Activated CD4-positive, alpha-beta T cell treated with anti-CD3 and anti-CD28 coated beads, Interleukin-2, amount 10 ng/mL, durations not matched to agents 7 days and 5 days (primary cell): ENCODE measurements at regions of chr7 and their contacts with region 1.

Region 1: DNA sequence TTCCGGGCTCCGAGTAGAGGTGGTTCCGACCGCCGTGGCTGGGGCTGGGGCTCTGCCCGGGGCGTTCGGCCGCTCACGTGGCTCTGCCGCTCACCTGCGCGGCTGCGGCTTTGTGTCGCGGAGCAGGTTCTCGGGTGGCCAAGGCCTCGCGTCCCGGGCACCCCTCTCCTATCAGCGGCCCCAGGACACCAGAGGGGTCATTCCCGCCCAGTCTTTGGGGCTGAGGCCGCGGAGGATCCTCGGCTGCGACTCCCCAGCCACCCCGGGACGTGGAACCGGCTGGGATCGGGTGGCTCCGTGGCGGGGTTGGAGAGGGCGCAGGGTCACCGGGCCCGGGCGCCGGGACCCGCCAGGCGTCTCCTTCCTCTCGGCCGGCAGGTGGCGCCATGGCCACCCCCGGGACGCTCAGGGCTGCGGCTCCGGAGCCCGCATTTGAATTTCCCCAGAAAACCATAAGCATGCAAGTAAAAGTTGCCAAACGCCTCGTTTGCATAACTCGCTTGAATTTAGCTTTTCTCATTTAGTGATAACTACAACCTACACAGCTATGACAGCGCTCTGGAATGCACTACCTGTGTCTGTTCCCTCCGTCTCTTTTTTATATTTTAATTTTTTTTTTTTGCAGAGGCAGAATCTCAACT is 1.2 kb downstream of the COL26A1 start:
- DNase-seq: peak; percentile 65
- H3K4me3 Mint-ChIP-seq: no peak overlapping the region
- H3K27ac Mint-ChIP-seq: no peak overlapping the region
- H3K4me1 Mint-ChIP-seq: no peaks in the 10 kb centered on the region
- H3K27me3 Mint-ChIP-seq: peaks cover 28% of the 10 kb centered on the region

Region 2: GRCh38 chr7:101373812-101374614 is 10.2 kb after region 1 on chr7:
- CTCF ChIA-PET with region 1: interaction called, 17 read pairs
- POLR2A ChIA-PET with region 1: no interaction called
- DNase-seq: no peak
- H3K4me3 Mint-ChIP-seq: no peak overlapping the region
- H3K27ac Mint-ChIP-seq: no peak overlapping the region
- H3K4me1 Mint-ChIP-seq: peaks cover 5% of the 10 kb centered on the region
- H3K27me3 Mint-ChIP-seq: peaks cover 15% of the 10 kb centered on the region

Region 3: DNA sequence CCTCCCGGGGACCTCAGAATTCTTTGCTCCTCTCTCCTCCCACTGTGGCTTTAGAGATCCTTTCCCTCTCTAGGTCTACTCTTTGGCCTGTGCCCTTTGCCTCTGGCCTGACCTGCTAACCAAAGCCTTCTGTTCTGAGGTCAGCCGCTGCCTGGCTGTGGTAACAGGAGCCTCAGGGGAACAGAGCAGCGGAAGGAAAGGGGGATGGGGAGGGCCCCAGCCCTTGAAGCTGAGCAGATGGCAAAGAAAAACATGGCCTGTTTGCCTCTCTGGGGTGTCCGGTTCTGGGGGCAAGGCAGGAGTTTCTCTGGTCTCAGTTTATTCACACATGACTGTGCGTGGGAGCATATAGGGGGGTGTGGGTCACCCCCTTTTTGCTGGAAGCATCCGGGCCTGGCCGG is 27.0 kb after region 1 on chr7:
- CTCF ChIA-PET with region 1: no interaction called
- POLR2A ChIA-PET with region 1: no interaction called
- DNase-seq: peak; percentile 62
- H3K4me3 Mint-ChIP-seq: peak overlapping the region; percentile 51
- H3K27ac Mint-ChIP-seq: peak overlapping the region; percentile 91
- H3K4me1 Mint-ChIP-seq: peaks cover 29% of the 10 kb centered on the region
- H3K27me3 Mint-ChIP-seq: peaks cover 9% of the 10 kb centered on the region